ENCODE measurements at regions of chr11 and their contacts with region 1.

Region 1: GRCh38 chr11:76807206-76807875 is 24.2 kb downstream of the TSKU start:
- DNase-seq: peak; percentile 46
- H3K4me3 ChIP-seq: peak overlapping the region in 1 of 3 experiments; percentile 7
- H3K27ac ChIP-seq: no peak overlapping the region
- H3K4me1 ChIP-seq: peaks cover 13% of the 10 kb centered on the region
- H3K27me3 ChIP-seq: no peaks in the 10 kb centered on the region
- CTCF ChIP-seq: peak; percentile 73 to 77

Region 2: DNA sequence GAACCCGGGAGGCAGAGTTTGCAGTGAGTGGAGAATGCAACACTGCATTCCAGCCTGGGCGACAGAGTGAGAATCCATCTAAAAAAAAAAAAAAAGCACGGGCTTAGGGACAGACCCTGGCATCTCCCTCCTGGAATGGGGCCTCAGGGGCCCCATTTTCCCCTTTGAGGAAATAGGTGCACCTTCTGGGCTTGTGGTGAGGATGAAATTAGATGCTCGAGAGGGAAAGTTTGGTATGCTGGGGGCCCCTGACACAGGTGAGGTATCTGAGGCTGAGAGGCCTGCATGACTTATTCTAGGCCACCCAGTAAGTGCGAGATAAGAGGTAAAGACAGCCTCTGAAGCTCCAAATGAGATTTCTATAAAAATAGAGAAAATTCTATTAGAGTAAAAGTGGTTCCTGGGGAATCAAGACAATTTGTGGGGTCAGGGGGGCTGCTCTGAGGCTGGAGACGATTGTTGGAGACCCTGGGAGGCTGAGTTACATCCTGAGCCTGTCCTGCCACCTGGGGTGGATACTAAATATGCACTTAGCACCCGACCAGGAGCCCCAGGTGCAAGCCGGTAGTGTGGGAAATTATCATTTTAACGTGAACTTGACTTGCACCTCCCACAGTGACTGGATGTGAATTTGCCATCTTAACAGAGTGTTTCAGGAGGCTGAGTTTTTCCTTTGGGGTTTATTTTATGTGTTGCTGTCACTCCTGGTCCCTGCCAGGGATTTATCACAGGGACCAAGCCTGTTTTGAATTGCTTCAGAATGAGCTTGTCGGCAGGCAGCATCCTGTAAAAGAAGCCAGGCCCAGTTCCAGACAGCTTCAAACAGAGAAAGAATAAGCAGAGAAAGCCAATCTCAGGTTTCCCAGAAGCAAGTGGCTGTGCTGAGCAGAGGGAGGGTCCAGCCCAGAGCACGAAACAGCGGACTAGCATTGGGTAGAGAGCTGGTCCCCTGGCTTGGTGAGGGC is 72.6 kb before region 1 on chr11:
- CTCF ChIA-PET with region 1: no interaction called
- dilution Hi-C with region 1: no loop called
- in situ Hi-C with region 1: no loop called
- intact Hi-C with region 1: loop called (anchors 2 kb)
- DNase-seq: no peak
- H3K4me3 ChIP-seq: no peak overlapping the region
- H3K27ac ChIP-seq: no peak overlapping the region
- H3K4me1 ChIP-seq: no peaks in the 10 kb centered on the region
- H3K27me3 ChIP-seq: no peaks in the 10 kb centered on the region
- CTCF ChIP-seq: no peak

Region 3: DNA sequence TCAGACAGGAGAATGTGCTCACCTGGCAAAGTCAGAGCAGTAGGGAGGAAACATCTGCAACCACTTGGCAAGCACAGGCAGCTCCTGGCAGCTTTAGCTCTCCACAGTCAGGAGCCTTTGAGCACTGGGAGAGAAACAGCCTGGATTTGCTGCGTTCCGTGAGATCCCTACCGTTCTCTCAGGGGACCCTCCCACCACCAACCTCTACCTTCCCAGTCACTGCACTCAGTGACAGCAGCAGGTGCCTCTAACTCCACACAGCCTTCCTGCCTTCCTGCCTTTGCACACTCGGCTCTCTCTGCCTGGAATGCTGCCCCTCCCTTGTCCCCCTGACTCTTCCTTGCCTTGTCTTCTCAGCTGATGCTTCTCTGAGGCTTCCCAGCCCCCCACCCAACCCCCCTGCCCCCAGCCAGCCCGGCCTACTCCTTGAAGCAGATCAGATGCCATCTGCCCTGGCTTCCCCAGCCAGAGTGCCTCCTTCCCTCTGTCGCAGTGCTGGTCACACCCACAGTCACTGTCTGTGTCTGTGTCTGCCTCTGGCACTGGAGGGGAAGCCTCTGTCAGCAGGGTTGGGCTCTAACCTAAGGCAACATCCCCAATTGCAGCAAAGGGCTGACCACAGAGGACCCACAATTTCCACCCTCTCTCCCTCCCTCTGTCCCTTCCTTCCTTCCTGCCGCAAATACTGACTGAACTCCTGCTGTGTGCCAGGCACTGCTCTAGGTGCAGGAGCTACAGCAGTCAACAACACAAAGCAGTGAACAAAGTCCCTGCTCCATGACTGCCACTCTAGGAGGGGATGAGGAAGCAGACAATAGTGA is 39.0 kb before region 1 on chr11:
- CTCF ChIA-PET with region 1: no interaction called
- dilution Hi-C with region 1: no loop called
- in situ Hi-C with region 1: no loop called
- intact Hi-C with region 1: no loop called
- DNase-seq: peak; percentile 60
- H3K4me3 ChIP-seq: peak overlapping the region in 1 of 3 experiments; percentile 31
- H3K27ac ChIP-seq: no peak overlapping the region
- H3K4me1 ChIP-seq: peaks cover 56% of the 10 kb centered on the region
- H3K27me3 ChIP-seq: no peaks in the 10 kb centered on the region
- CTCF ChIP-seq: no peak

Region 4: DNA sequence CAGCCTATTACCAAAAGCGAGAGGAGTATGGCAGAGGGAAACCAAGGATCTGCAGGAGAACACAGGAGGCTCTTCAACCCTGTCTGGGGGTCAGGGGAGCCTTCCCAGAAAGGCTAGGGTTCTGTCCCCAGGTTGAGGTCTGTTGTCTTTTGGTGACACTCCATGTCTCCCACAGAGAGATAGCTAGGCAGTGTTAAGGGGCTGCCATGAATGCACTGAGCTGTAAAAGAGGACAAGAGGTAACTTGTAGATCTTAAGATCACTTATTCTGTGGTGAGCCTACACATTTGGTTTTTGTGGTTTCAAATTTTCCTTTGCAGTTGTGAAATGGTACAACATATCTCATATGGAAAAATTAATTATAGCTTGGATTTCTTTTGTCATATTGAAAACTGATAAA is 47.4 kb after region 1 on chr11:
- CTCF ChIA-PET with region 1: interaction called, 12 read pairs
- dilution Hi-C with region 1: no loop called
- in situ Hi-C with region 1: no loop called
- intact Hi-C with region 1: no loop called
- DNase-seq: peak; percentile 47
- H3K4me3 ChIP-seq: no peak overlapping the region
- H3K27ac ChIP-seq: no peak overlapping the region
- H3K4me1 ChIP-seq: peaks cover 11% of the 10 kb centered on the region
- H3K27me3 ChIP-seq: no peaks in the 10 kb centered on the region
- CTCF ChIP-seq: no peak

Region 5: GRCh38 chr11:76903329-76903728 is 96.0 kb after region 1 on chr11:
- CTCF ChIA-PET with region 1: no interaction called
- dilution Hi-C with region 1: no loop called
- in situ Hi-C with region 1: loop called in 1 of 2 experiments (anchors 10 kb)
- intact Hi-C with region 1: no loop called
- DNase-seq: peak; percentile 79
- H3K4me3 ChIP-seq: no peak overlapping the region
- H3K27ac ChIP-seq: no peak overlapping the region
- H3K4me1 ChIP-seq: peaks cover 4% of the 10 kb centered on the region
- H3K27me3 ChIP-seq: no peaks in the 10 kb centered on the region
- CTCF ChIP-seq: no peak

Region 6: GRCh38 chr11:77091146-77091940 is 284.0 kb after region 1 on chr11:
- CTCF ChIA-PET with region 1: no interaction called
- dilution Hi-C with region 1: no loop called
- in situ Hi-C with region 1: no loop called
- intact Hi-C with region 1: loop called (anchors 1 kb)
- DNase-seq: peak; percentile 64
- H3K4me3 ChIP-seq: no peak overlapping the region
- H3K27ac ChIP-seq: no peak overlapping the region
- H3K4me1 ChIP-seq: no peaks in the 10 kb centered on the region
- H3K27me3 ChIP-seq: no peaks in the 10 kb centered on the region
- CTCF ChIP-seq: peak; percentile 96 to 98

Measured in mammary epithelial cell (primary cell).